Right ventricle myocardium inferior (tissue), 1 donor: ENCODE measurements at regions of chr9 and their contacts with region 1.

Region 1: DNA sequence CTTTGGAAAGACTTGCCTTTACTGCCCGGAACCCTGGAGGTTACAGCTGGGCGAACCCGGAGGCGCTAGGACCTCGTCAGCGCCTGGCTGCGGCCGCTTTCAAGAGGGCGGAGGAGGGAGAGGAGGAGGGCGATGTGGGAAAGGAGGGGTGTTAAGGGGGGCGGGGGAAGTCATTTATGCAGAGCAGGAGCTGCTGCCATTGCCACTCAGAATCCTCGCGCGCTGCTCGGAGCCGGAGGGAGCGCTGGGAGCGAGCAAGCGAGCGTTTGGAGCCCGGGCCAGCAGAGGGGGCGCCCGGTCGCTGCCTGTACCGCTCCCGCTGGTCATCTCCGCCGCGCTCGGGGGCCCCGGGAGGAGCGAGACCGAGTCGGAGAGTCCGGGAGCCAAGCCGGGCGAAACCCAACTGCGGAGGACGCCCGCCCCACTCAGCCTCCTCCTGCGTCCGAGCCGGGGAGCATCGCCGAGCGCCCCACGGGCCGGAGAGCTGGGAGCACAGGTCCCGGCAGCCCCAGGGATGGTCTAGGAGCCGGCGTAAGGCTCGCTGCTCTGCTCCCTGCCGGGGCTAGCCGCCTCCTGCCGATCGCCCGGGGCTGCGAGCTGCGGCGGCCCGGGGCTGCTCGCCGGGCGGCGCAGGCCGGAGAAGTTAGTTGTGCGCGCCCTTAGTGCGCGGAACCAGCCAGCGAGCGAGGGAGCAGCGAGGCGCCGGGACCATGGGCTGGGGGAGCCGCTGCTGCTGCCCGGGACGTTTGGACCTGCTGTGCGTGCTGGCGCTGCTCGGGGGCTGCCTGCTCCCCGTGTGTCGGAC is at the start of gene PCSK5:
- DNase-seq: peak; percentile 92
- ATAC-seq: peak; percentile 98
- total RNA-seq, gene PCSK5: 4.5 TPM

Region 2: GRCh38 chr9:75826314-75826713 is 64.4 kb before region 1 on chr9:
- intact Hi-C with region 1: no loop called
- DNase-seq: no peak
- ATAC-seq: no peak

Region 3: GRCh38 chr9:76161541-76161940 is 270.9 kb after region 1 on chr9:
- intact Hi-C with region 1: loop called (anchors 10 kb)
- DNase-seq: no peak
- ATAC-seq: peak; percentile 81

Region 4: GRCh38 chr9:76297721-76298239 is 407.1 kb after region 1 on chr9:
- intact Hi-C with region 1: loop called (anchors 10 kb)
- DNase-seq: no peak
- ATAC-seq: peak; percentile 90